Spleen (tissue), 13 donors: ENCODE measurements at regions of chr12 and their contacts with region 1.

Region 1: DNA sequence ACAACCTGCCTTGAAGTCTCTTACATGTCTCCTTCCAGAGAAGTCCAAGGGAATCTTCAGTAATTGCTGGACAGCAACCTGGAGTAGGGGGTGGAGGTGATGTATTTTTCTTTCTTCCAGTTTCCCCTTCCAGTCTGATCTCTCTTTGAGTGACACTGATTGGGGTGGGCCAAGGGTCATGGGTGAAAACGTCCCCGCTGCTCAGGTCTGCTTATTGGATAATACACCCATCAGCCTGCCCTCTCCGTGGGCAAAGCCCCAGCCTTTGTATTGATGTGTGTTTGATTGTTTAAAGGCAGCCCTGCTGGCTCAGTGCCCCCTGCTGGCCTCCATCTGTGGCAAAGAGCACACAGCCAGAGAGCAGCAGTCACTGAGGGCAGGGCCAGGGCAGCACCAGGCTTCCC is 35.7 kb upstream of the ATP2A2 start:
- DNase-seq: peak; percentile 79
- H3K4me3 ChIP-seq: no peak overlapping the region
- H3K27ac ChIP-seq: no peak overlapping the region
- H3K4me1 ChIP-seq: peaks cover 0 to 7% (median 0%) of the 10 kb centered on the region in 6 donors
- H3K27me3 ChIP-seq: no peaks in the 10 kb centered on the region
- CTCF ChIP-seq: peak in 10 of 11 experiments; percentile 9 to 71 (median 46)
- POLR2A ChIP-seq: no peak

Region 2: GRCh38 chr12:110100315-110100970 is 144.9 kb before region 1 on chr12:
- intact Hi-C with region 1: loop called (anchors 10 kb)
- DNase-seq: peak; percentile 80
- H3K4me3 ChIP-seq: peak overlapping the region in 1 of 8 donors; percentile 1
- H3K27ac ChIP-seq: peak overlapping the region in 7 of 8 donors; percentile 16 to 69 (median 56)
- H3K4me1 ChIP-seq: peaks cover 10 to 24% (median 13%) of the 10 kb centered on the region in 6 donors
- H3K27me3 ChIP-seq: no peaks in the 10 kb centered on the region
- CTCF ChIP-seq: peak; percentile 80 to 93 (median 88)
- POLR2A ChIP-seq: no peak